A549 (cell line): ENCODE measurements at regions of chr20 and their contacts with region 1.

Region 1: GRCh38 chr20:51695574-51696303 is 72.5 kb downstream of the ATP9A start:
- DNase-seq: peak; percentile 22 to 46
- ATAC-seq: peak; percentile 48 to 56; a peak in 2 of 6 replicates
- H3K4me3 ChIP-seq: no peak overlapping the region
- H3K27ac ChIP-seq: peak overlapping the region; percentile 56 to 80
- H3K4me1 ChIP-seq: peaks cover 25% of the 10 kb centered on the region
- CTCF ChIP-seq: no peak
- EP300 ChIP-seq: no peak
- POLR2A ChIP-seq: no peak
- RAD21 ChIP-seq: no peak

Region 2: GRCh38 chr20:51715163-51715860 is 19.6 kb after region 1 on chr20:
- CTCF ChIA-PET with region 1: interaction called, 14 read pairs
- POLR2A ChIA-PET with region 1: interaction called, 6 read pairs
- DNase-seq: no peak
- ATAC-seq: no peak
- H3K4me3 ChIP-seq: no peak overlapping the region
- H3K27ac ChIP-seq: peak overlapping the region in 1 of 2 experiments; percentile 7; a peak in 1 of 6 replicates
- H3K4me1 ChIP-seq: no peaks in the 10 kb centered on the region
- CTCF ChIP-seq: no peak
- EP300 ChIP-seq: no peak
- POLR2A ChIP-seq: no peak
- RAD21 ChIP-seq: no peak

Region 3: DNA sequence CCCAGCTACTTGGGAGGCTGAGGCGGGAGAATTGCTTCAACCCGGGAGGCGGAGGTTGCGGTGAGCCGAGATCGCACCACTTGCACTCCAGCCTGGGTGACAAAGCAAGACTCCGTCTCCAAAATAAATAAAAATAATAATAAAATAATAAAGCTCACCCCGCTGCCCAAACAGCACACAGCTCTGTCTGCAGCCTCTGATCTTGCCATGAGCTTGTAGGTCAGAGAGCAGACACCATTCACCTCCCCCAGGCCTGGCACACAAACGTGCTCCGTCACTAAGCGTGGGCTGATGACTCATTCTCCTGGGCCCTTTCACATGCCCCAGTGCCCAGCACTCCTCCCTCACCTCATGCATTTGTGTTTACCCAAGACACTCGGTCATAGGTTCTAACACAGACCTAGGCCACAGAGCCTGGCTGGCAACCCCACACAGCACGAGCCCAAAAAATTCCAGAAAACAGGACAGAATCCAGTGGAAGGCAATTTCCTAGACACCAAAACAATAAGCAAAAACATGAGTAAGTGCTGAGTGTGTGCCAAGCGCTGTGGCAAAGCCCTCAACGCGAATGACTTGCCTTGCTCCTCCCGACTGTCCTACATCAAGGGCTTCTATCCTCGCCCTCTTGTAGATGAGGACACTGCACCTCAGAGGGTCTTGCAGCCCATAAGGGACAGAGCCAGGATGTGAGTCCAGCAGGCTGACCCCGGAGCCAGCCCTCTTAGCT is 54.5 kb after region 1 on chr20:
- CTCF ChIA-PET with region 1: interaction called, 25 read pairs
- POLR2A ChIA-PET with region 1: interaction called, 6 read pairs
- DNase-seq: peak; percentile 93 to 99
- ATAC-seq: peak; percentile 93 to 95
- H3K4me3 ChIP-seq: peak overlapping the region; percentile 14
- H3K27ac ChIP-seq: peak overlapping the region; percentile 89
- H3K4me1 ChIP-seq: peaks cover 60% of the 10 kb centered on the region
- CTCF ChIP-seq: no peak
- EP300 ChIP-seq: peak; percentile 70 to 79; a peak in 3 of 5 replicates
- POLR2A ChIP-seq: no peak
- RAD21 ChIP-seq: peak; percentile 4 to 47; a peak in 2 of 5 replicates

Region 4: DNA sequence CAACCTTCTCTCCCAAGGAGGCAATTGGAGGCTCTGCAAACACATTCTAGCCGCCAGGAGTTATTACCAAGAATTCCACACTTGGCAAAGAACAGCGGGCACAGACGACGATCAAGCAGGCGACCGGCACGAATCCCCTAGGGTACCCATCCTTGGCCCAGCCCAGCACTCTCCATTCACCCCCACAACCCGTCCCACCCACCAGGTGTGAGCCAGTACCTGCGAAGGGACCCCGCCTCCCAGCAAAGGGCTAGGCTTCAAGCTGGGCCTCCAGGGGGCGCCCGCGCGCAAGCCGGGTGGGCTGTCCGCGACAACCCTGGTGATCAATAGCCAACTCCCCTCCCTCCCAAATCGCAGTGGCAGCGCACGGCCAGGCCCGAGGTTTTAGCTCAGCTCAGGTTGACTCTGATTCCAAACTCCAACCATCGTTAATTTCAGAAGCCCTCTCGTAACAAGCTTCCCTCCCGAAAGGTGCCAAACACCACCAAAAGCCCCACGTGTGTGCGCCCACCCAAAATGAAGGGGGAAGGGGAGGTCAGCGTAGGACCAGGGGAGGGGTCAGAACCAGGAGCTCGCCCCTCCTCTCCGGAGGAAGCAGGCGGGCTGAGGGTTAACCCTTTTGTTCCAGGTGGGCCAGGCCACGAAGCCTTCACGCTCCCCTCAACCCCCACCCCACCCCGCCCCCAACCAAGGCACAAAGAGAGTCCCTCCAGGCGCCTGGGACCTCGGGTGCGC is 104.5 kb after region 1 on chr20:
- CTCF ChIA-PET with region 1: interaction called, 19 read pairs
- POLR2A ChIA-PET with region 1: no interaction called
- DNase-seq: peak; percentile 62 to 90
- ATAC-seq: peak; percentile 79 to 91
- H3K4me3 ChIP-seq: peak overlapping the region; percentile 84
- H3K27ac ChIP-seq: peak overlapping the region; percentile 95 to 96
- H3K4me1 ChIP-seq: peaks cover 30% of the 10 kb centered on the region
- CTCF ChIP-seq: peak; percentile 91
- EP300 ChIP-seq: no peak
- POLR2A ChIP-seq: no peak
- RAD21 ChIP-seq: peak; percentile 78 to 85

Region 5: GRCh38 chr20:52083627-52084232 is 388.0 kb after region 1 on chr20:
- CTCF ChIA-PET with region 1: interaction called, 12 read pairs
- POLR2A ChIA-PET with region 1: no interaction called
- DNase-seq: peak; percentile 63 to 69
- ATAC-seq: peak; percentile 79 to 88
- H3K4me3 ChIP-seq: no peak overlapping the region
- H3K27ac ChIP-seq: no peak overlapping the region
- H3K4me1 ChIP-seq: 0 out of 3 replicates have a peak, but pooled peaks cover 3% of the 10 kb centered on the region
- CTCF ChIP-seq: peak; percentile 80
- EP300 ChIP-seq: no peak
- POLR2A ChIP-seq: no peak
- RAD21 ChIP-seq: peak; percentile 93 to 95